HAP-1 (cell line): ENCODE measurements at regions of chr19 and their contacts with region 1.

Region 1: GRCh38 chr19:35754356-35755139 is 2.3 kb downstream of the HSPB6 start:
- DNase-seq: no peak
- H3K4me3 ChIP-seq: no peak overlapping the region
- H3K4me1 ChIP-seq: peaks cover 6% of the 10 kb centered on the region; the same call in 1 of the 2 replicates
- H3K27me3 ChIP-seq: no peaks in the 10 kb centered on the region

Region 2: DNA sequence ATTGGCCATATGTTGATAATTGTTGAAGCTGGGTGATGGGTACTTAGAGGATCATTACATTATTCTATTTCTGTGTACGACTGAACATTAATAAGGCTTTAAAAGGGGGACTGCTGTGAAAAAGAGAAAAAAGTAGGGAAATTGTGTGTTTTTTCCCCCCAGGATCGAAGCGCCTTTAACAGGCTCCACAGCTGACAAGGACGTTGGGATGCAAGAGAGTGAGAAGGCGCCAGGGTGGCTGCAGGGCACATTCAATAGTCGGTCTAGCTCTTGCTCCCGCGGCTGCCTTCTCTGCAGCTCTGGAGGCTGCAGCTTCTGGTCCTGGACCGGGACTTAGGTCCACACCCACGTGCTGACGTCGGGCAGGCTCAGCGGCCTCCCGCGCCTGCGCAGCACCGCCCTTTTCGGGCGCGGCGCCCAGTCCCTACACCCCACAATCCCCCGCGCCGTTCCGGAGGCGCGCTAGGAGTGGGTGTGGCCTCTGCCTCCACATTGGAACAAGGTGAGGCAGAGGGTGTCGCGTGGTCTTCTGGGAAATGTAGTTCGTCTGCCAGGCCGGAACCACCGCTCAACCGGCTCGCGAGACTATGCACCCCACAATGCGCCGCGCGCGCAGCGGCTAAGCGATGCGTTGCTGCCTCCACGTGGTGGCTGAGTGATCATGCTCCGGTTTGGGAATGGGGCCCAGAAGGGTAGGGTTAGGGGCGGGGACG is 176.8 kb after region 1 on chr19:
- in situ Hi-C with region 1: loop called (anchors 5 kb)
- DNase-seq: peak; percentile 99
- H3K4me3 ChIP-seq: peak overlapping the region; percentile 5; the same call in 1 of the 2 replicates
- H3K4me1 ChIP-seq: peaks cover 12% of the 10 kb centered on the region
- H3K27me3 ChIP-seq: no peaks in the 10 kb centered on the region